A673 (cell line): ENCODE measurements at regions of chr1 and their contacts with region 1.

Region 1: DNA sequence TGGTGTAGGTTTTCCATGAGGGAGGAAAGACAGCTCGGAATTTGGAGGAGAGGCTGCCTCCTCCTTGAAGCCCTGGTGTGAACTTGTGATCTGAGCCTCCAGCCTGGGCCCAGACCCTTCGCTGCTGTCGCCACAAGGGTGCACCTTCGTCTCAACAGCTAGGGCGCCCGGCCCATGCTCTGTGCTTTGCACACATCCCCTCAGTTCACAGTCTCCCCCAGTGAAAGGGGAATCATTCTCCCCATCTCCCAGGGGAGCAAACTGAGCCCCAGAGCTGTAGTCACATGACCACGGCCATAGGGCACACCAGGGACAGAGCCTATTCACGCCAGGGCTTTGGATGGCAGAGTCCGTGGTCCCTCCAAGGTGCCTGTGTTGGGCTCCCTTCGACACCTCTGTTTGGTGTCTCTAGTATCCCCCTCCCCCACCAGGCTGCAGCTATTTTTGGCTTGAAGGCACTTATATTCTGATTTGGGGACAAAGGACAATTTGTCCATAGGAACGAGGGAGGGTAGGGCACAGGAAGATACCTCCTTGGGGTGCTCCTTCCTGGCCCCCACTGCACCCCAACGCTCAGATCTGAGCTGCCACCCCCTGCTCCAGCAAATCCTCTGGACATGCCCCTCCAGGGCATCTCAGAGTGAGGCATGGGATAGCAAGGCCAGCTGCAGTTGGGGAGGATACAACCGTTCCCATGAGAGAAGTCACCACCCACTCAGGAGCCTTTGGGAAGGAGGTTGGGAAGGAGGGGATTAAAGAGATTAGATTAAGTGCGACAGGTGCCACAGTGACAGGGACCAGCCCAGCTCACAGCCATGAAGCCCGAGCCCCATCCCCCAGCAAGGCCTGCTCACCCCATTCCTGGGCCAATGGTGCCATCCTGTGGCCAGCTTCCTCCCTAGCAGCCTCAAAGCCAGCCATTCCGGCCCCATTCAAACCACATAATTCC is 15.7 kb downstream of the MATN1 start:
- DNase-seq: peak; percentile 86
- H3K4me3 ChIP-seq: no peak overlapping the region
- H3K27ac ChIP-seq: no peak overlapping the region
- H3K4me1 ChIP-seq: peaks cover 10% of the 10 kb centered on the region
- H3K27me3 ChIP-seq: no peaks in the 10 kb centered on the region
- CTCF ChIP-seq: peak; percentile 90

Region 2: GRCh38 chr1:29332204-29332603 is 1375.5 kb before region 1 on chr1:
- CTCF ChIA-PET with region 1: interaction called, 4 read pairs
- POLR2A ChIA-PET with region 1: no interaction called
- intact Hi-C with region 1: loop called (anchors 10 kb)
- DNase-seq: peak; percentile 75
- H3K4me3 ChIP-seq: no peak overlapping the region
- H3K27ac ChIP-seq: no peak overlapping the region
- H3K4me1 ChIP-seq: no peaks in the 10 kb centered on the region
- H3K27me3 ChIP-seq: no peaks in the 10 kb centered on the region
- CTCF ChIP-seq: peak; percentile 81

Region 3: GRCh38 chr1:29698033-29698432 is 1009.7 kb before region 1 on chr1:
- CTCF ChIA-PET with region 1: interaction called, 4 read pairs
- POLR2A ChIA-PET with region 1: no interaction called
- intact Hi-C with region 1: loop called (anchors 5 kb)
- DNase-seq: peak; percentile 91
- H3K4me3 ChIP-seq: no peak overlapping the region
- H3K27ac ChIP-seq: no peak overlapping the region
- H3K4me1 ChIP-seq: no peaks in the 10 kb centered on the region
- H3K27me3 ChIP-seq: no peaks in the 10 kb centered on the region
- CTCF ChIP-seq: peak; percentile 79

Region 4: DNA sequence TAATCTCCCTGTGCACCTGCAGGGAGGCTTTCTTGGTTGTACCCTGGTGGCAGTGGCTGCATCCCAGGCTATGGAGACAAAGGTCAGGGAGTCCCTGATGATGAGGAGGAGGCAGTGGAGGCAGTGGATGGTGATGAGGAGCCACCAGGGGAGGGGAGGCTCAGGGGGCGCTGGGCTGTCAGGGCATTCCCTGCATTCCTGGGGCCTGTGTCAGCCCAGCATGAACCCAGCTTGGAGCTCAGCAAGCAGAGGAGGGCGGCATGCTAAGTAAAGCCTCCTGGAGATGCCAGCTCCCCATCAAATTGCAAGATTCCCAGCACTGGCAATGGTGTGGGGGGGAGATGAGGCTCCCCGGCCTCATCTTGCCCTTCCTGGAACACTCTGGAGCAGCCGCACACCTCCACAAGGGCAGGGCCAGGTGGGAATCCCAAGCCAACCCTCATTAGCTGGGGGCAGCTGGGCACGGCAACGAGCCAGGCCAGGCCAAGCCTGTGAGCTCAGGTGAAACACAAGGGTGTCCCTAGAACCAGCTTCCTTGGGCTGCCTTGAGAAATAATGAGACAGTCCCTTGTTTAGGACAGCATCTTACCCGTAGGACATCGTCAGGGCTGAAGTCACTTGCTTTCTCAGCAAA is 453.8 kb before region 1 on chr1:
- CTCF ChIA-PET with region 1: no interaction called
- POLR2A ChIA-PET with region 1: no interaction called
- intact Hi-C with region 1: loop called (anchors 10 kb)
- DNase-seq: peak; percentile 73
- H3K4me3 ChIP-seq: no peak overlapping the region
- H3K27ac ChIP-seq: peak overlapping the region; percentile 100
- H3K4me1 ChIP-seq: peaks cover 94% of the 10 kb centered on the region
- H3K27me3 ChIP-seq: no peaks in the 10 kb centered on the region
- CTCF ChIP-seq: no peak

Region 5: DNA sequence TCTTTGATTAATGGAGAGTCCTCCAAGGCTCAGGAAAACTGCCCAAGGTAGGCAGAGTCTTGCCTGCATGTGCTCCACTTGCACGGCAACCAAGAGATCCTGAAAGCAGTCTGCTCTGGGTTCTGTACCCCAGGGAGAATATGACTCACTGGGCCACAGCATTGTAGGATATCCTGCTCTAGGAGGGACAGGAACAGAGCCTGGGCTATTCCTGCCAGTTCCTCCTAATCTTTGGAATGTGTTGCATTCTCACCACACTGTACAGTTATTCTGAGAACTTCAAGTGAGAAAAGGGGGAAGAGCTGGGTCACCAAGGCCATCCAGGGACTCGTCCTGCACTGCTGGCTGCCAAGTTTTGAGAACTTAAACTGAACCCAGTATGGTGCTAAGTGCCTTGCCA is 262.8 kb before region 1 on chr1:
- CTCF ChIA-PET with region 1: no interaction called
- POLR2A ChIA-PET with region 1: no interaction called
- intact Hi-C with region 1: no loop called
- DNase-seq: peak; percentile 18
- H3K4me3 ChIP-seq: no peak overlapping the region
- H3K27ac ChIP-seq: no peak overlapping the region
- H3K4me1 ChIP-seq: no peaks in the 10 kb centered on the region
- H3K27me3 ChIP-seq: no peaks in the 10 kb centered on the region
- CTCF ChIP-seq: no peak

Region 6: DNA sequence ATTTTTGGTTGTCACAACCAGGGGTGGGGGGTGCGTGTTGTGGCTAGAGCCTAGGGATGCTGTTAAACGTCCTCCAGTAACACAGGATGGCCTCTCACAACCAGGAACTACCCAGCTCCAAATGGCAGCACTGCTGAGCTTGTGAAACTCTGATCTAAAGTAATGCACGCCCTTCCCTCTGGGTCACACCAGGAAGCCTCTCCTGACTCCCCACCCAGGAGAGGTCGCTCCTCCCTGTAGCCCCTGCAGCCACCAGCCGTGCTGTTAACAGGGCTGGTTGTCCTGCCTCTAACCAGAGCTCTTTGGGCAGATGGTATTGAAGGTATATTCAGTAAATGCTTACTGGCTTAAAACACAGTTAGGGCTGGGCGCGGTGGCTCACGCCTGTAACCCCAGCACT is 458.8 kb after region 1 on chr1:
- CTCF ChIA-PET with region 1: no interaction called
- POLR2A ChIA-PET with region 1: no interaction called
- intact Hi-C with region 1: no loop called
- DNase-seq: no peak
- H3K4me3 ChIP-seq: no peak overlapping the region
- H3K27ac ChIP-seq: no peak overlapping the region
- H3K4me1 ChIP-seq: peaks cover 8% of the 10 kb centered on the region
- H3K27me3 ChIP-seq: no peaks in the 10 kb centered on the region
- CTCF ChIP-seq: no peak